WTC11 (cell line): ENCODE measurements at regions of chr2 and their contacts with region 1.

Region 1: DNA sequence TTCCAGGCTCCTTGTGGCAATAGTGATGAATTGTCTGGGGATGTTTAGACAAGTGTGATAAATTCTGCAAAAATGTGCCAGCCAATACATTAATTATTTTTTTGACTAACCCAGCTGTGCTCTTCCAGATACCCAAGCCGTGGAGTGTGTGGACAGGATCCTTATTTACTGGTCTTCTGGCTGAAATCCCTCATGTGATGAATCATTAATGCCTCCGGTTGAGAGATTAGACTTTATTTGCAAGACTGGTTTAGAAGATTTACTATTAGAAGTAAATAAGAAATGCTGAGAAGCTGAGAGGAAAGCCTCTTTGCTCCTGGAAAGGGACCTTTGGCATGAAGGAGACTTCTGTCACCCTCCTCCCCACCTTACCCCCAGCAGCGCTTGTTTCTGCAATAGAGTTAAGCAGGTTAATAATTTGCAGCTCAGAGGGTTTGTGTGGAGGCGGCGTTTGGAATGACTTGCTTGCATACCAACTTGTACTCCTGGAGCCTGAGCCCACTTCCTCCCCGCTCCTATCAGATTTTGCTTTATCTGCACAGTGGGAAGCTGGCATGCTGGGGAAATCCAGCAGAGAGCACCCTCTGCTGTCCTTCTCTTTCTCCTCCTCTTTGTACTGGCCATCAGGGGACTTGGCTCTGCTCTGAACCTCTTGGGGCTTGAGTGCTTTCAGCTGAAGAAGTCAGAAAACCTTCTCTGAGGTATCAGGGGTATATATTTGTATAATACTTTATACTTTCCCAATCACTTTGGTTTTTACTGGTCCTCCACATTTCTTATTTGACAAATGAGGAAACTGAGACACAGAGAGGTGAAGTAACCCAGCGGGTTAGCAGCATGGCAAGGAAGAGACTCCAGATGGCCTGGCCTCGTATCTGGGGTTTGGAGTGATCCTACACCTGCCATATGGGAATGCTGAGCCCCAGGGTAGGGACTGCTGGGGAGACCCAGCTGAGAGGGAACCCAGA is 16.3 kb downstream of the SLC3A1 start:
- DNase-seq: peak; percentile 29
- ATAC-seq: peak; percentile 59
- H3K4me3 Mint-ChIP-seq: no peak overlapping the region
- H3K27ac Mint-ChIP-seq: no peak overlapping the region
- H3K4me1 Mint-ChIP-seq: peaks cover 24% of the 10 kb centered on the region
- H3K27me3 Mint-ChIP-seq: no peaks in the 10 kb centered on the region
- CTCF ChIP-seq: no peak

Region 2: GRCh38 chr2:44075541-44075940 is 216.0 kb before region 1 on chr2:
- CTCF ChIA-PET with region 1: no interaction called
- POLR2A ChIA-PET with region 1: no interaction called
- DNase-seq: no peak
- ATAC-seq: no peak
- H3K4me3 Mint-ChIP-seq: no peak overlapping the region
- H3K27ac Mint-ChIP-seq: no peak overlapping the region
- H3K4me1 Mint-ChIP-seq: peaks cover 9% of the 10 kb centered on the region
- H3K27me3 Mint-ChIP-seq: no peaks in the 10 kb centered on the region
- CTCF ChIP-seq: no peak

Region 3: GRCh38 chr2:44087036-44087713 is 204.4 kb before region 1 on chr2:
- CTCF ChIA-PET with region 1: interaction called, 11 read pairs
- POLR2A ChIA-PET with region 1: no interaction called
- DNase-seq: peak; percentile 94
- ATAC-seq: peak; percentile 87
- H3K4me3 Mint-ChIP-seq: peak overlapping the region; percentile 62
- H3K27ac Mint-ChIP-seq: peak overlapping the region; percentile 92
- H3K4me1 Mint-ChIP-seq: peaks cover 44% of the 10 kb centered on the region
- H3K27me3 Mint-ChIP-seq: no peaks in the 10 kb centered on the region
- CTCF ChIP-seq: peak; percentile 92

Region 4: DNA sequence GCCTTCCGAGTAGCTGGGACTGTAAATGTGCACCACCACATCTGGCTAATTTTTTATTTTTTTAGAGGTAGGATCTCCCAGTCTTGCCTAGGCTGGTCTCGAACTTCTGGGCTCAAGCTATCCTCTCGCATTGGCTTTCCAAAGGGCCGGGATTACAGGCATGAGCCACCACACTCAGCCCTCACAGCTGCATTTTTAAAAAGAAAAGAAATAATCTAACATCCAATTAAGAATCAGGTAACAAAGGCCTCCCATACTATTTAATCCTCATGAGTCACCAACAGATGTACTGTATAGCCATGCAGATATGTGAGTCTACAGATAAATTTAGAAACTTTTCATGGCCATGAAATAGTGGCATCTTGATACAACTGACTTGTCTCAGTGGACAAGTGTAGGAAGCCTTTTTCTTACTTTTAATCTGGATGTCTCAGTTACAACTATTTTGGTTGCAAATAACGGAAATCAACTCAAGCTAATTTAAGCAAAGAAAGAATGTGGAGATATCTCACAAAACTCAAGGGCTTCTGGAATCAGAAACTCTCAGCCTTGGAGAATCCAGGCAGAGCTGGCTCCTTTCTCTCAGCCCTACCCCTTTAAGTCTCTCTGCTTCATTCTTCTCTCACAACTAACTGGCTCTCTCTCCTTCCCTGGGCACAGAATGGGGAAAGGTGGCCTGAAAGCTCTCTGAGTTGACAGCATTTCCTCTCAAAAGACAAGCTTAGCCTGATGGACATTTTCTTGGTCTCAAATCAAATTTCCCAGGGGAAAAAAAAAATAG is 135.7 kb before region 1 on chr2:
- CTCF ChIA-PET with region 1: no interaction called
- POLR2A ChIA-PET with region 1: no interaction called
- DNase-seq: no peak
- ATAC-seq: no peak
- H3K4me3 Mint-ChIP-seq: no peak overlapping the region
- H3K27ac Mint-ChIP-seq: no peak overlapping the region
- H3K4me1 Mint-ChIP-seq: peaks cover 3% of the 10 kb centered on the region; the same call in 1 of the 2 replicates
- H3K27me3 Mint-ChIP-seq: no peaks in the 10 kb centered on the region; the same call in 1 of the 2 replicates
- CTCF ChIP-seq: no peak

Region 5: DNA sequence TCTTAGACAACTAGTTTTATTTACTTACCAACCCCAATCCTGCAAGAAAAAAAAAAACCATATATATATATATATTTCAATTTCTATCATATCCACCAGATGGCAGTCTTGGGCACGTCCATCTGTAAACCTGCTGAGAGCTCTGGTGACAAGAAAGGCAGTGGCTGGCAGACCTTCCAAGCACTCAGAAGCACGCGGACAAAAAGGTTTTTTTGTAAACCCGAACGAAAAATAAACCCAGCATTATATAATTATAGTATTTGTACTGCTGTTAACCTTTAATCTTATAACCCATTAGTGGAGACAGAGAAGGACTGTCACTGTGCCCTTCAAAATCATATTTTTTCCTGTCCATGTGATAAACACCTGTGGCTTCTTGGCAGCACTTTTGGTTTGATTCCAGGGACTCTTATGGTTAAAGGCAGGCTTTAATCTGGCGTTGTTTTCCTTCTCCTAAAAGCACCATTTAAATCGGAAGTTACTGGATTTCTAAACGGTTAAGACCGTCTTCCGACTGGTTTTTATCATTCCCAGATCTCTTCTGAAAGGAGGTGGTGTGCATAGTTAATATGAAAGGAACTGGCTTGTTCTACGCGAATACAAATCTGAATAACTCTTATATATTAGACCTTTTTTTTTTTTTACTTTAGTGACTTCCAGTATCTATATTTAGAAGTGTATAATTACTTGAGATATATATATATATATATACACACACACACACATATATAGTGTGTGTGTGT is 47.3 kb before region 1 on chr2:
- CTCF ChIA-PET with region 1: interaction called, 11 read pairs
- POLR2A ChIA-PET with region 1: no interaction called
- DNase-seq: peak; percentile 41
- ATAC-seq: peak; percentile 49
- H3K4me3 Mint-ChIP-seq: no peak overlapping the region
- H3K27ac Mint-ChIP-seq: no peak overlapping the region
- H3K4me1 Mint-ChIP-seq: peaks cover 32% of the 10 kb centered on the region
- H3K27me3 Mint-ChIP-seq: no peaks in the 10 kb centered on the region
- CTCF ChIP-seq: peak; percentile 46; the same call in 1 of the 2 replicates